ENCODE measurements at regions of chr11 and their contacts with region 1.

Region 1: DNA sequence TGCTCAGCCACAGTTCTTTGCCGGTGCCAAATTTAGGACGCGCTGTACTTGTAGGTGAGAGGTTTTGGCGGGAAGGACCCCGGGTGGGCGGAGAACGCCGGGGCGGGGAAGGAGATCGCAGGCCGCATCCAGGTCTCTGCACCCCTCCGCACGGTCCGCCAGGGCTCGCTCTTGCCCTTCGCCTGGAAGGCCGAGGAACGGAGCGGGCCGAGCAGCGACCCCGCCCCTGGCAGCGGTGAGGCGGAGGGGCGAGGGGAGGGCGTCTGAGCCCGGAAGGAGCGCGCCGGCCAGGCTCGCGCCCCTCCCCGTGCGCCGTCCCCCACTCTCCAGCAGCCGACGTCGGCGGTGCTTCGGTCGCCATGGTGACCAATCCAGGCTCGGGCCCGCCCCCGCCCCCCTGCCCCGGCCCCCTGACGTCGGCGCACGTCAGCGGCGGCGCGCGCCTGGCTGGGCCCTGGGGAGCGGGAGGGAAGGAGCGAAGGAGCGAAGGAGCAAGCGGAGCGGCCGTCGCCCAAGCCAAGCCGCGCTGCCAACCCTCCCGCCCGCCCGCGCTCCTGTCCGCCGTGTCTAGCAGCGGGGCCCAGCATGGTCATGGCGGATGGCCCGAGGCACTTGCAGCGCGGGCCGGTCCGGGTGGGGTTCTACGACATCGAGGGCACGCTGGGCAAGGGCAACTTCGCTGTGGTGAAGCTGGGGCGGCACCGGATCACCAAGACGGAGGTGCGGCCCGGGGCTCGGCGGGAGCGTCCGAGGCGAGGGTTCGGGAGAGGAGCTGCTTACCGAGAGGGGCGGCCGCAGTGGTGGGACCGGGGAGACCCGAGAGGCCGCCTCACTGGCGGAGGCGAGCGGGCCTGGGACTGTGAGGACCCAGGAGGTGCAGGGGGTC is at the start of gene SIK2:
- DNase-seq: peak; percentile 95
- H3K4me3 ChIP-seq: peak within 1 kb of the TSS; percentile 66 to 80 (median 67)
- H3K27ac ChIP-seq: peak within 1 kb of the TSS; percentile 92
- H3K4me1 ChIP-seq: peaks cover 17% of the 10 kb centered on the region
- H3K27me3 ChIP-seq: no peaks in the 10 kb centered on the region
- CTCF ChIP-seq: peak; percentile 88 to 100
- POLR2A ChIP-seq: no peak
- total RNA-seq, gene SIK2: 11.7 and 14.6 TPM in 2 replicates

Region 2: GRCh38 chr11:111387363-111387762 is 214.9 kb before region 1 on chr11:
- CTCF ChIA-PET with region 1: no interaction called
- POLR2A ChIA-PET with region 1: no interaction called
- dilution Hi-C with region 1: no loop called
- intact Hi-C with region 1: no loop called
- DNase-seq: no peak
- H3K4me3 ChIP-seq: no peak overlapping the region
- H3K27ac ChIP-seq: no peak overlapping the region
- H3K4me1 ChIP-seq: no peaks in the 10 kb centered on the region
- H3K27me3 ChIP-seq: no peaks in the 10 kb centered on the region
- CTCF ChIP-seq: no peak
- POLR2A ChIP-seq: no peak

Region 3: GRCh38 chr11:111575740-111576139 is 26.5 kb before region 1 on chr11:
- CTCF ChIA-PET with region 1: no interaction called
- POLR2A ChIA-PET with region 1: no interaction called
- dilution Hi-C with region 1: no loop called
- intact Hi-C with region 1: no loop called
- DNase-seq: no peak
- H3K4me3 ChIP-seq: no peak overlapping the region
- H3K27ac ChIP-seq: no peak overlapping the region
- H3K4me1 ChIP-seq: peaks cover 5% of the 10 kb centered on the region
- H3K27me3 ChIP-seq: no peaks in the 10 kb centered on the region
- CTCF ChIP-seq: no peak
- POLR2A ChIP-seq: no peak

Region 4: DNA sequence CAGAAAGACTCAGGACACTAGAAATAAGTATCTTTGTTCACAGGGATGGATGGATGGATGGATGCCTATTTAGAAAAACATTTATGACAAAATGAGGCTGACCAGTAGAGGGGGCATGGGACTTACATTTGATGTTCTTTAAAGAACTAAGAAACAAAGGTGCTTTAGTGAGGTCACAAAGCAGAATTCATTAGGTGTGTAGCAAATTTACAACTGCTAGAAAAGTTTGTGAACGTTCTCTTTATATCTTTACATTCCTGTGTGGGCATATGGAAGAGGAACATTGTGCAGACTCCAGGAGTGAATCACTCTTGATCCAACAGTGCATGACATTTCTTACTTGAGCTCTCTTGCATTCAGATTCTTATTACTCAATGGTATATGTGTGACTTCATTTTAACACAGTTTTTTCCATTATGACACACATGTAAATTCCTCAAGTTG is 15.8 kb before region 1 on chr11:
- CTCF ChIA-PET with region 1: interaction called, 20 read pairs
- POLR2A ChIA-PET with region 1: no interaction called
- dilution Hi-C with region 1: no loop called
- intact Hi-C with region 1: loop called (anchors 1 kb)
- DNase-seq: peak; percentile 59
- H3K4me3 ChIP-seq: no peak overlapping the region
- H3K27ac ChIP-seq: no peak overlapping the region
- H3K4me1 ChIP-seq: peaks cover 8% of the 10 kb centered on the region
- H3K27me3 ChIP-seq: peaks cover 0 to 2% of the 10 kb centered on the region in 2 experiments
- CTCF ChIP-seq: peak; percentile 38 to 49
- POLR2A ChIP-seq: no peak

Region 5: DNA sequence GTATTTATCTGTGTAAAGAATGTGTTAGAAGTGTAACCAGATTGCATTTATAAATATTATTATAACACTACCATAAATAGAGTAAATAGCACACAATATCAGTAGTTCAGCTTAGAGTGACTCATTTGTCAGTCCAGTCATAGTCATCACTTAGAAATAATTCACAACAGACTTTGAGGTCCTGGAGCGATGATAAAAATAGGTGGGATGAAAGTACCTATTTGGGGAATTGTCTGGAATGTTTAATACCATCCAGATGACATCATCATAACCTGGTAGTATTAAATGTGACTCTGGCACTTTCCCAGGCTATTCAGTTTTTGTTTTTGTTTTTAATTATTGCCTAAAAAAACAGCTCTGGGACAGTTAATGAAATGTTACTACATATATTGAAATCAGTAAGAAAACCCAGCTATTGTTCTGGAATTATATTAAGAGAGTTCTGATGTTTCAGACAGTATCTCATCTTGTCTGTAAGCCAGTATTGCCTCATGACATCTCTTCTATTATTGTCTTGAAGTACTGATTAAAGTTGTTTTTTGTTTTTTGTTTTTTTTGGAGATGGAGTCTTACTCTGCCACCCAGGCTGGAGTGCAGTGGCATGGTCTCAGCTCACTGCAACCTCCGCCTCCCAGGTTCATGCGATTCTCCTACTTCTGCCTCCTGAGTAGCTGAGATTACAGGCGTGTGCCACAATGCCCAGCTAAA is 74.8 kb after region 1 on chr11:
- CTCF ChIA-PET with region 1: interaction called, 12 read pairs
- POLR2A ChIA-PET with region 1: no interaction called
- dilution Hi-C with region 1: no loop called
- intact Hi-C with region 1: no loop called
- DNase-seq: peak; percentile 48
- H3K4me3 ChIP-seq: no peak overlapping the region
- H3K27ac ChIP-seq: no peak overlapping the region
- H3K4me1 ChIP-seq: peaks cover 7% of the 10 kb centered on the region
- H3K27me3 ChIP-seq: no peaks in the 10 kb centered on the region
- CTCF ChIP-seq: no peak
- POLR2A ChIP-seq: no peak

Region 6: DNA sequence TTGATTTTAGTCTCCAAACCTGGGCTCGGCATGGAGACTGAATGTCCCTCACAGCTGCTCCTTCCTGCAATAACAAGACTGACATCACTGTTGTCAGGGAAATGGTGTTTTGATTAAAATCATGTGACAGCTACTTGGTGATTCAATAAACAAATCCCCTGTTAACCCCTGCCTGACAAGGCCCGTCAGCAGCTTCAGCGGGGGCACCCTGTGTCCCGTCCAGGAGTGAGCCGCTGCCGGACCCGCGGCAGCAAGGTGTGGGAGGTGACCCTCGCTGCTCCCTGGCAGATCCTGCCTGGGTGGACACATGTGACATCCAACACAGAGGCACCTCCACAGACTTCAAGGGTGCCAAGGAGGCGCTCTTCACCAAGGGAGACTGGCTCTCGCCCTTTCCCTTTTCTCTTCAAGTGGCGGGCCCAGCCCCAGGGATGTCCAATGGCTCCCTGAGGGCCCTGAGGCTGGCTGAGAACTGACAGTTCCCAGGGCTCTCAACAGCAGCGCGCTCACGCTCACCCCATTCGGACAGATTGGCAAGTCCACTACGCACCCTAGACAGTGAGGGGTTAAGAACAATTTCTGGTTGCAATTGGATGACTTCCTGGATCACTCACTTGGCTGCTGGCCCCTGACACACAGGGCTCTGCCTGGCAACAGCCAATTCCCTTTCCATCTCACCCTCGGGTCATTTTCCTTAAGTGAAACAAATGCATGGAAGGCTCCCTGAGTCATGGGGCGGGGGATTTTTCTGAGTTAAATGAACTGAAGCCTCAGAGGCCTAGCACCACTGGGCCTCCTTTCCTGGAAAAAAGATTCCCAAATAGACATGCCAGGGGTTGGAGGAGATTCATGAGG is 133.3 kb after region 1 on chr11:
- CTCF ChIA-PET with region 1: interaction called, 35 read pairs
- POLR2A ChIA-PET with region 1: interaction called, 4 read pairs
- dilution Hi-C with region 1: no loop called
- intact Hi-C with region 1: loop called (anchors 1 kb)
- DNase-seq: peak; percentile 98
- H3K4me3 ChIP-seq: no peak overlapping the region
- H3K27ac ChIP-seq: peak overlapping the region; percentile 85
- H3K4me1 ChIP-seq: peaks cover 59% of the 10 kb centered on the region
- H3K27me3 ChIP-seq: no peaks in the 10 kb centered on the region
- CTCF ChIP-seq: no peak
- POLR2A ChIP-seq: peak; percentile 67

Region 7: DNA sequence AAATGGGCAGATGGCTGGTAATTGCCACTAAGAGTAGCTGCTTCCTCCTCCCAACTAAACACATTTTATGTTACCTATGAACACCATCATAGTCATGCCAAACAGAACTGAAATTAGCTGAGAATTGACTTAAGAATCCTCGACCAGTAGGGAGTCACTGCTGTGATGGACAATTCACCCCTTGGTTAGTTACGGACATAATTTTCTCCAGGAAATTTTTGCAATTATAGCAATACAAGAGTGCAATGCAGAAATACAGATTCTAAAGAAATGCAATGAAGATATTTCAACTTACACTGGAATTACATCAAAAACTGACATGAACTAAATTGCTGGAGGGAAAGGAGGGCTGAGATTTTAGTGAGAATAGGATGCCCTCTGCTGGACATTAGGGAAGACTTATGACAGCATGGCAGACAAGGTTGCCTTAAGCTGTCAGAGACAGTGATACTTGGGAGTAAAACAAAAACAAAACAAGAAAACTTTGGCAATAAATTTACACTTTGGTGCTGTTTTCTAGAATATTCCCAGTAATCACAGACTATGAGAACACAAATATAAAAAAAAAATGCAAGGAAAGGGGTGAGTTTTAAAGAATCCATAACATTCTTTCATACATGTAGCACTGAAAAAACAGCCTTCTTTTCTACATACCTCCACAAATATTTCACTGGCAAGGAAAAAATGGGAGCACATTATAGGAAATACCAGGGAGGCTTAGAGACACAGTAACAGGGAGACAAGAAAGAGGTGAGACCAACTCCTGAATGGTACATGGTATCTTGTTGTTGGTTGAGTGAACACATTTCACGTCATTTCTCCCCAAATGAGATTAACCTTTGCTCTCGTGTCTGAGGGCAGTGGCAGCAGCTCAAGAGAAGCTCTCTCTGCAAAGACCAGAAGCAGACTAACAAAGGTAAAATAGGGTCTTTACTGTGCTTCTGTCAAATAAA is 175.1 kb after region 1 on chr11:
- CTCF ChIA-PET with region 1: interaction called, 63 read pairs
- POLR2A ChIA-PET with region 1: no interaction called
- dilution Hi-C with region 1: no loop called
- intact Hi-C with region 1: loop called (anchors 1 kb)
- DNase-seq: peak; percentile 75
- H3K4me3 ChIP-seq: no peak overlapping the region
- H3K27ac ChIP-seq: no peak overlapping the region
- H3K4me1 ChIP-seq: no peaks in the 10 kb centered on the region
- H3K27me3 ChIP-seq: no peaks in the 10 kb centered on the region
- CTCF ChIP-seq: peak; percentile 62 to 63
- POLR2A ChIP-seq: no peak

Region 8: DNA sequence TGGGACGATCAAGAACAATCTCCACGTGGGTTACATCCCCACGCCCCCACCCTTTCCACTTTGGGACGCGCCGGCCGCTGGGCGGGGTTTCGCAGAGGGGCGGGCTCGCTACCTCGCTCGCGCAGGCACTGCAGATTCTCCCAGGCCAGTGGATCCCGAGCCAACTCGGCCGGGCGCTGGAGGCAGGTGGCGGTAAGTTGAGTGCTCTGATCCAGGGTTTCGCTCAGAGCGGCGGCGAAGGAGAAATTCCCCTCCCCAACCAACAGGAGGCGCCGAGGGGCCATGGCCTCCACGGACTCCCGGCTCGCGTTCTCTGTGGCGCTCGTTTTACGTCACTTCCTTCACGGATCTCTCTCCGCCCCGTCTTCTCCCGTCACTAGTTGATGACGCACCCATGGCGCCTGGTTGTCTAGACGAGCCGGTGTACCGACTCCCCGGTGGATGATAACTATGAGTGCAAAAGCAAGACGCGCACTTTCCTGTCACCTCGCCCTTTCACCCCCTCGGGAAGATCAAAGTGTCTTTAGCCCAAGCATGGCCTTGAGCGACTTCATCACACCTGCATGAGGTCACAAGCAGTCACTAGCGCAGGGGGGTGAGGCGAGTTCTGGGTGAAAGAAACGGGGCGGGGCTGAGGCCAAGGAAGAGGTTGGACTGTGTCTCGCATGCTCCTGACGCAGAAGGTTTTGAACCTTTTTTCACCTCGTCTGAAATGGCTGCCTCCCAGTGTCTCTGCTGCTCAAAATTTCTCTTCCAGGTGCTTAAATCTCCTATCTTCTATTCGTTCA is 276.8 kb after region 1 on chr11 and contains the starts of genes CFAP68 and FDXACB1:
- CTCF ChIA-PET with region 1: no interaction called
- POLR2A ChIA-PET with region 1: no interaction called
- dilution Hi-C with region 1: no loop called
- intact Hi-C with region 1: loop called (anchors 1 kb)
- DNase-seq: peak; percentile 98
- H3K4me3 ChIP-seq: peak within 1 kb of the TSS; percentile 53 to 84 (median 62)
- H3K27ac ChIP-seq: peak within 1 kb of the TSS; percentile 93
- H3K4me1 ChIP-seq: peaks cover 21% of the 10 kb centered on the region
- H3K27me3 ChIP-seq: no peaks in the 10 kb centered on the region
- CTCF ChIP-seq: peak; percentile 97 to 98
- POLR2A ChIP-seq: peak; percentile 69
- total RNA-seq, gene CFAP68: 7.4 TPM in 2 replicates
- total RNA-seq, gene FDXACB1: 1.4 and 3.3 TPM in 2 replicates

Region 9: DNA sequence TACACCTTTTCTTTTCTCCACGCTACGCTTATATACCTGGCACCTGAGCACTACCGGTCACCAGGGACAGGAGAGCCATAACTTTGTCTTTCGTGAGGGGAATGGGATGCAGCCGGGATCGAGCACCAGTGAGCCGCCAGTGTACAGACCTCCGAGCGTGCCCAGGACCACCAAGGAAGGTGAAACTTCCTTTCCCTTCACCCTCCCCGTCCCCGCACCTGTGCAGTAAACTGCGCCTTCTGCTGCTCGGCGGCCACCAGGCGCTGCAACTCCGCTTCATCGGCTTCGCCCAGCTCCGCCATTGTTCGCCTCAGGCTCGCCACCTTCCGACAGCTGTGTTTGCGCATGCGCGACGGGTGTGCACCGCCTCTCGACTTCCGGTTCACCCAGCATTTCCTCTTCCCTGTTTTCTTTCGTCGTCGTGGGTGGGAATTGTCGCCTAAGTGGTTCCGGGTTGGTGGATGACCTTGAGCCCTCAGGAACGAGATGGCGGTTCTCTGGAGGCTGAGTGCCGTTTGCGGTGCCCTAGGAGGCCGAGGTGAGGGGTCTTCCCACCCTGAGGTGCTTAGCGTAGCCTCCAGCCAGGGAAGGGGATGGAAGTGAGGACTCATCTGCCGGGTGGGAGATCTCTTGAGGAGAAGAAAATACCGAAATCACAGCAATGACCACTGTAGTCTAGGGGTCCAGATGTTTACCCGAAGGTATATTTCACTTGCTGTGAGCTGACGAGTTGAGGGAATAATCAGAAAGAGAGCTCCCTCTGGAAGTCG is 484.4 kb after region 1 on chr11 and contains the starts of genes SDHD and TIMM8B:
- CTCF ChIA-PET with region 1: no interaction called
- POLR2A ChIA-PET with region 1: no interaction called
- dilution Hi-C with region 1: no loop called
- intact Hi-C with region 1: loop called (anchors 10 kb)
- DNase-seq: peak; percentile 98
- H3K4me3 ChIP-seq: peak within 1 kb of the TSS; percentile 54 to 90 (median 86)
- H3K27ac ChIP-seq: peak within 1 kb of the TSS; percentile 54
- H3K4me1 ChIP-seq: peaks cover 13% of the 10 kb centered on the region
- H3K27me3 ChIP-seq: no peaks in the 10 kb centered on the region
- CTCF ChIP-seq: peak; percentile 17 to 62
- POLR2A ChIP-seq: peak; percentile 52
- total RNA-seq, gene SDHD: 72.3 and 79.0 TPM in 2 replicates
- total RNA-seq, gene TIMM8B: 64.1 and 77.0 TPM in 2 replicates

Measured in endothelial cell of umbilical vein (primary cell).